ENCODE measurements at regions of chr7 and their contacts with region 1.

Region 1: GRCh38 chr7:26187380-26188205 is 13.0 kb downstream of the HNRNPA2B1 start:
- DNase-seq: no peak
- ATAC-seq: peak; percentile 2
- H3K4me3 ChIP-seq: no peak overlapping the region
- H3K27ac ChIP-seq: no peak overlapping the region
- H3K4me1 ChIP-seq: peaks cover 20% of the 10 kb centered on the region
- H3K27me3 ChIP-seq: no peaks in the 10 kb centered on the region
- CTCF ChIP-seq: no peak
- EP300 ChIP-seq: no peak
- POLR2A ChIP-seq: peak; percentile 50 to 76
- RAD21 ChIP-seq: no peak; the same call in 1 of the 2 replicates

Region 2: GRCh38 chr7:26034391-26034790 is 153.2 kb before region 1 on chr7:
- CTCF ChIA-PET with region 1: no interaction called
- POLR2A ChIA-PET with region 1: no interaction called
- in situ Hi-C with region 1: no loop called
- intact Hi-C with region 1: no loop called
- DNase-seq: no peak
- ATAC-seq: no peak
- H3K4me3 ChIP-seq: no peak overlapping the region
- H3K27ac ChIP-seq: no peak overlapping the region
- H3K4me1 ChIP-seq: peaks cover 8% of the 10 kb centered on the region; the same call in 1 of the 2 replicates
- H3K27me3 ChIP-seq: no peaks in the 10 kb centered on the region
- CTCF ChIP-seq: no peak
- EP300 ChIP-seq: no peak
- POLR2A ChIP-seq: no peak
- RAD21 ChIP-seq: no peak

Region 3: DNA sequence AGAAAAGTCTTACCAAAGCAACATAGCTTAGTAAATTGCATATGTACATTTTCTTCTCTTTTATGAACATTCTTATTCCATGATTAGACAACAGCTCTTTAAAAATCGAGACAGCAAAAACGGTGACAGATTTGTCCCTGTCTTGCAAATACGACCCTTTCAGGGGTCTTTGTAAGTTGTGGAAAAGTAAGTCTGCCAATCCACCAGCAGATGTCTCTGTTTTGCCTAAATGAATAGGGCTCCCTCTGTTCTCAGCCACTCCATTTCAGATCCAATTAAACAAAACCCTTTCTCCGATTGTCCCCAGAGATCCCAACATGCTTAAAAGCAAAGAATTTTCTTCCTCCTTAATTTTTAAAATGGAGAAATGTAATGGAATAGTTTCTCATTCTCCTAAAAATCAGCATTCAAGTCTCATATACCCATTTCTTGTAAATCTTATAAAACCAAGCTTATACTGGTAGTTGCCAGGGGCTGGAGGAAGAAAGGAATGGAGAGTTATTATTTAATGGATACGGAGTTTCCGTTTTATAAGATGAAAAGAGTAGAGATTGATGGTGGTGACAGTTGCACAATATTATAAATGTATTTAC is 96.6 kb before region 1 on chr7:
- CTCF ChIA-PET with region 1: no interaction called
- POLR2A ChIA-PET with region 1: no interaction called
- in situ Hi-C with region 1: loop called (anchors 10 kb)
- intact Hi-C with region 1: loop called (anchors 5 kb)
- DNase-seq: peak; percentile 54
- ATAC-seq: peak; percentile 70
- H3K4me3 ChIP-seq: no peak overlapping the region
- H3K27ac ChIP-seq: no peak overlapping the region
- H3K4me1 ChIP-seq: peaks cover 15% of the 10 kb centered on the region
- H3K27me3 ChIP-seq: 0 out of 5 replicates have a peak, but pooled peaks cover 0 to 3% of the 10 kb centered on the region in 2 experiments
- CTCF ChIP-seq: peak; percentile 72
- EP300 ChIP-seq: no peak
- POLR2A ChIP-seq: no peak
- RAD21 ChIP-seq: peak; percentile 30; the same call in 1 of the 2 replicates

Measured in HepG2 (cell line).